ENCODE measurements at regions of chr17 and their contacts with region 1.

Region 1: GRCh38 chr17:40854159-40854814 is 12.7 kb downstream of the KRT12 start:
- DNase-seq: peak in 1 of 14 experiments; percentile 3
- ATAC-seq: no peak
- H3K4me3 ChIP-seq: no peak overlapping the region
- H3K4me3 Mint-ChIP-seq: no peak overlapping the region
- H3K27ac ChIP-seq: no peak overlapping the region
- H3K27ac Mint-ChIP-seq: no peak overlapping the region
- H3K4me1 ChIP-seq: no peaks in the 10 kb centered on the region
- H3K4me1 Mint-ChIP-seq: peaks cover 4% of the 10 kb centered on the region
- H3K27me3 ChIP-seq: peaks cover 0 to 22% of the 10 kb centered on the region in 2 experiments
- H3K27me3 Mint-ChIP-seq: peaks cover 34% of the 10 kb centered on the region
- CTCF ChIP-seq: no peak

Region 2: DNA sequence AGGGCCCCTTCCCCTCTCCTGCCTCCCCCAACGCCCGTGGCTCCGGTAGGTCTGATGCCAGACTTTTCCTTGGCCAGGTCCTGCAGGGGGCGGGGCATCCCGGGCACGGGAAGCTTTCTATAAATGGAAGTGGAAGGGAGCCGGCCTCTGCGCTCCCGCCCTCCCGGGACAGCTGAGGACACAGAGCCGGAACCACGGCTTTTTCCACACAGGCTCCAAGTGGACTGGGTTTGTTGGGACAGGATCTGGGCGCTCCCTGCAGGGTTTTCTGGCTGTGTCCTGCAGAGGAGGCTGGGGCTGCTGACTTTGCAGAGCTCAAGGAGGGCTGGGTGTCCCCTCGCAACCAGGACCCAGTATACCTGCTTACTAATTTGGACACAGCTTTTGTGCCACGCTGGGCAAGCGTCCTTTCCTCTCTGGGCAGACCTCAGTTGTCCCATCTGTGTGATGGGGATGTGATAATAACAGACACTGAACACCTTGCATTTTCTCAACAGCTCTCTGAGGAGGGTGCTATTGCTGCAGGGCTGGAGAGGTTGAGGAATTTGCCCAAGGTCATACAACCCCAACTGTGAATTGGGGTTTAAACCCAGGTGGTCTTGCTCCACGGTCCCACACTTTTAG is 354.6 kb before region 1 on chr17:
- CTCF ChIA-PET with region 1: no interaction called
- POLR2A ChIA-PET with region 1: no interaction called
- intact Hi-C with region 1: no loop called
- DNase-seq: no peak
- ATAC-seq: no peak
- H3K4me3 ChIP-seq: no peak overlapping the region
- H3K4me3 Mint-ChIP-seq: no peak overlapping the region
- H3K27ac ChIP-seq: no peak overlapping the region
- H3K27ac Mint-ChIP-seq: no peak overlapping the region
- H3K4me1 ChIP-seq: no peaks in the 10 kb centered on the region
- H3K4me1 Mint-ChIP-seq: no peaks in the 10 kb centered on the region
- H3K27me3 ChIP-seq: no peaks in the 10 kb centered on the region
- H3K27me3 Mint-ChIP-seq: no peaks in the 10 kb centered on the region
- CTCF ChIP-seq: no peak

Region 3: GRCh38 chr17:40803617-40804082 is 50.6 kb before region 1 on chr17:
- CTCF ChIA-PET with region 1: no interaction called
- POLR2A ChIA-PET with region 1: no interaction called
- intact Hi-C with region 1: loop called in 1 of 2 experiments (anchors 5 kb)
- DNase-seq: peak; percentile 51 to 85 (median 66)
- ATAC-seq: peak; percentile 89
- H3K4me3 ChIP-seq: no peak overlapping the region
- H3K4me3 Mint-ChIP-seq: no peak overlapping the region
- H3K27ac ChIP-seq: no peak overlapping the region
- H3K27ac Mint-ChIP-seq: no peak overlapping the region
- H3K4me1 ChIP-seq: no peaks in the 10 kb centered on the region
- H3K4me1 Mint-ChIP-seq: peaks cover 4% of the 10 kb centered on the region
- H3K27me3 ChIP-seq: peaks cover 11 to 58% of the 10 kb centered on the region in 2 experiments
- H3K27me3 Mint-ChIP-seq: peaks cover 54% of the 10 kb centered on the region
- CTCF ChIP-seq: peak; percentile 91

Region 4: DNA sequence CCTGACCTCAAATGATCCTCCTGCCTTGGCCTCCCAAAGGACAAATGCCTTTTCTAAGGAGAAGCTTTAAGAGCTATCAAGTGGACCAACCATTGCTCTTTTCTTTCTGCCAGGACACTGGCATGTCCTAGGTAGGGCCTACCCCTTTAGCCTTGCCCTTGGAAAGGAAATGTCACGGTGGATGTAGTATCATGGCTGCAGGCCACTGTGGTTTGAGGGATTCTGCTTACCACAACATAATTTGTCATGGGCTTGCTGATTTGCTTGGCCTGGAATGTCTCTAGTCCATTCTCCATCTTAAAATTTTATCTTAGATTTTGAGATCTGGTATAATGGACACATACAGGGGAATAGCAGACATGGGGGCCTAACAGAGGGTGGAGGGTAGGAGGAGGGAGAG is 24.7 kb after region 1 on chr17:
- CTCF ChIA-PET with region 1: no interaction called
- POLR2A ChIA-PET with region 1: no interaction called
- intact Hi-C with region 1: no loop called
- DNase-seq: no peak
- ATAC-seq: no peak
- H3K4me3 ChIP-seq: no peak overlapping the region
- H3K4me3 Mint-ChIP-seq: no peak overlapping the region
- H3K27ac ChIP-seq: no peak overlapping the region
- H3K27ac Mint-ChIP-seq: no peak overlapping the region
- H3K4me1 ChIP-seq: no peaks in the 10 kb centered on the region
- H3K4me1 Mint-ChIP-seq: no peaks in the 10 kb centered on the region
- H3K27me3 ChIP-seq: no peaks in the 10 kb centered on the region
- H3K27me3 Mint-ChIP-seq: peaks cover 10% of the 10 kb centered on the region
- CTCF ChIP-seq: no peak

Measured in CD4-positive, alpha-beta T cell (primary cell).